ENCODE measurements at regions of chr1 and their contacts with region 1.

Region 1: DNA sequence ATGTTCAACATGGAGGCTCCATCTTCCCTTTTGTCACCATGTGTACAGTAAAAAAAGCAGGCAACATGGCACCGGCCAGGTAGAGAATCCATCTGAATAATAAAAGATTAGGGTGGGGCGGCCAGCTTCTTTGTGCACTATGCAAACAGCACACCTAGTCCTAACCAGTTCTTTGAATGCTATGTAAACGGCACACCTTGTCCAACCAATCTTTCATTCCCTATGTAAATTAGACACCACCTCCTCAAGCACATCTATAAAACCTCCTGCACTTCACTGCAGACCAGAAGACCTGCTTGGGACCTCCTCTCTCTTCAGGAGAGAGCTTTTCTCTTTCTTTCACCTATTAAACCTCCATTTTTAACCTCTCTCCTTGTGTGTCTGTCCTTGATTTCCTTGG is 28.2 kb downstream of the TFB2M start:
- DNase-seq: no peak
- ATAC-seq: no peak
- H3K4me3 Mint-ChIP-seq: no peak overlapping the region
- H3K27ac Mint-ChIP-seq: no peak overlapping the region
- H3K4me1 Mint-ChIP-seq: no peaks in the 10 kb centered on the region
- H3K27me3 Mint-ChIP-seq: no peaks in the 10 kb centered on the region

Region 2: DNA sequence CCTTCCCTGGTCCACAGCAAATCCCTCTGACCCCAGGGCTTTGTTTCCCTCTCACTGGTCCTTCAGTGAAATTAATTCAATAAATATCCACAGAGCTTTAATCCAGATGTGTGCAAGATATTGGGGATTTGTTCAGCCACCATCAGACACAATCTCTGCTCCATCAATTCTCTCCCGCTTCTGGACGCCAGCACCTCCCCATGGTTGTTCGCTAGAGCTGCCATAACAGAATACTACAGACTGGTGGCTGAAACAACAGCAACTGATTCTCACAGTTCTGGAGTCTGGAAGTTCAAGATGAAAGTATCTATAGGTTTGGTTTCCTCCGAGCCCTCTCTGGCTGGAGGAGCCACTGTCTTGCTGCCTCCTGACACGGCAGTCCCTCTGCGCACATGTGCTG is 334.7 kb before region 1 on chr1:
- CTCF ChIA-PET with region 1: no interaction called
- POLR2A ChIA-PET with region 1: no interaction called
- intact Hi-C with region 1: no loop called
- DNase-seq: no peak
- ATAC-seq: no peak
- H3K4me3 Mint-ChIP-seq: no peak overlapping the region
- H3K27ac Mint-ChIP-seq: no peak overlapping the region
- H3K4me1 Mint-ChIP-seq: no peaks in the 10 kb centered on the region
- H3K27me3 Mint-ChIP-seq: no peaks in the 10 kb centered on the region

Region 3: GRCh38 chr1:246659594-246660140 is 121.8 kb after region 1 on chr1:
- CTCF ChIA-PET with region 1: no interaction called
- POLR2A ChIA-PET with region 1: interaction called, 10 read pairs
- intact Hi-C with region 1: no loop called
- DNase-seq: no peak
- ATAC-seq: no peak
- H3K4me3 Mint-ChIP-seq: no peak overlapping the region
- H3K27ac Mint-ChIP-seq: no peak overlapping the region
- H3K4me1 Mint-ChIP-seq: no peaks in the 10 kb centered on the region
- H3K27me3 Mint-ChIP-seq: no peaks in the 10 kb centered on the region

Measured in activated CD4-positive, alpha-beta T cell treated with anti-CD3 and anti-CD28 coated beads for 36 hours (primary cell).